ENCODE measurements at regions of chr15 and their contacts with region 1.

Region 1: GRCh38 chr15:83430441-83430840 is 16.7 kb upstream of the SH3GL3 start:
- DNase-seq: no peak
- ATAC-seq: no peak
- H3K4me3 ChIP-seq: no peak overlapping the region
- H3K27ac ChIP-seq: no peak overlapping the region
- H3K4me1 ChIP-seq: no peaks in the 10 kb centered on the region
- H3K27me3 ChIP-seq: peaks cover 0 to 32% (median 18%) of the 10 kb centered on the region in 7 donors
- CTCF ChIP-seq: no peak

Region 2: DNA sequence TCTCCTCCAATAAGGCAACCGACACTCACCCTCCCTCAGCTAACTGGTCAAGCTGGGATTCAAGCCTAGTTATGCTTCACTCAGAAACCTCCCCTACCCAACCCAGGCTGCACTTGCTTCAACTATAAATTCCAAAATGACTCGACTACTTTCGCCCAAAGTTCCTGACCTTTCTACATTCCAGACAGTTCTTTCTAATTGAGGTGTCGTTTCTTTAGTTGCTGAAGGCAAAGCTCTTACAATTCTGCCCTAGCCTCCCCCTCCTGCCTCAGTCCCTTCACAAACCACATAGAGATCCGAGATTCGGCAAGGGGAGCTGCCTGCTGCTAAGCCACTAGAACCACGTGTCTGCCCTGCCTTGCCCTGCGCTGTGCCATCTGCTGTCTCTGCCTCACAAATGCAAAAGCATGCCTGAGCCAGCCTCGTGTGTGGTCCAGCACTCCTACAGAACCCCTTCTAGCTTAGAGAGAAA is 58.0 kb before region 1 on chr15:
- intact Hi-C with region 1: no loop called
- DNase-seq: no peak
- ATAC-seq: peak in 3 of 8 donors; percentile 24 to 47 (median 33)
- H3K4me3 ChIP-seq: no peak overlapping the region
- H3K27ac ChIP-seq: no peak overlapping the region
- H3K4me1 ChIP-seq: no peaks in the 10 kb centered on the region
- H3K27me3 ChIP-seq: peaks cover 3 to 97% (median 85%) of the 10 kb centered on the region in 7 donors
- CTCF ChIP-seq: no peak

Region 3: DNA sequence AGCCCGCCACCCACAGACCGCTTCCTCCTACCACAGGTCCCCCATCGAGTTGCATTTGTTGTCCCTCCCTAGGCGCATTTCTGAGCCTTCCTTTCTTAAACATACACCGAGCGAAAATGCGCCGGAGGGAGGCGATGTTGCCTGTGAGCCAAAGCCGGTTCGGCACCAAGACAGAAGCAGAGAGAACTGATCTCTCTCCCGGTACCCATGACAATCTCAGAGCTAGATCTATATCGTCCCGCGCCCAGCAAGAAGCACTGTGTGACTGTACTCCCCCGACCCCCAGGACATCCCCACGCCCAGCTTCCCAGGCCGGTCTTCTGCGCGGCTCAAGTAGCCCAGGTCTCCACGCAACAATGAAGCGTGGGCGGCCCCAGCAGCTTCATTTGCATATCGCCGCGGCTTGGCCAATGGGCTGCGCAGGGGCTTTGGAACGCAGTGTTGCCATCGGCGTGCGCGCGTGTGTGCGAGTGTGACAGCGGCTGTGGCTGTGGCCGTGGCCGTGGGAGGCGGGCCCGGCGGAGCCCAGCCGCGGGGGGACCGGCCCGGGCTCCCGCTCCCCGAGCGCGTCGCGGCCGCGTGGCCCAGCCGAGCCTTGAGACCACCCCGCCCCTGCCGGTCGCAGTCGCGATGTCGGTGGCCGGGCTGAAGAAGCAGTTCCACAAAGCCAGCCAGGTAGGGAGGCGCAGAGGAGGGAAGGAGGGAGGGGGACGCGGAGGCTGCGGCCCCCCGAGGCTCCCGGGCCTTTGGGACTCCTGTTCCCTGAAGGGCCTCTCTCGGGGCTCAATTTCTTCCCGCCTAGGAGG is 16.7 kb after region 1 on chr15 and contains the start of gene SH3GL3:
- intact Hi-C with region 1: loop called in 1 of 10 experiments (anchors 1 kb)
- DNase-seq: peak; percentile 74 to 77
- ATAC-seq: peak; percentile 92 to 99 (median 96)
- H3K4me3 ChIP-seq: peak within 1 kb of the TSS; percentile 2 to 56 (median 50)
- H3K27ac ChIP-seq: no peak within 1 kb of the TSS
- H3K4me1 ChIP-seq: peaks cover 0 to 13% (median 8%) of the 10 kb centered on the region in 9 donors
- H3K27me3 ChIP-seq: peaks cover 0 to 53% (median 28%) of the 10 kb centered on the region in 7 donors
- CTCF ChIP-seq: peak in 5 of 9 donors; percentile 19 to 49 (median 35)
- total RNA-seq, gene SH3GL3: 0.13 to 0.17 TPM in 2 of 10 donors, not detected in the others

Region 4: GRCh38 chr15:83462953-83463433 is 32.6 kb after region 1 on chr15:
- intact Hi-C with region 1: no loop called
- DNase-seq: no peak
- ATAC-seq: no peak
- H3K4me3 ChIP-seq: no peak overlapping the region
- H3K27ac ChIP-seq: no peak overlapping the region
- H3K4me1 ChIP-seq: no peaks in the 10 kb centered on the region
- H3K27me3 ChIP-seq: peaks cover 0 to 20% (median 0%) of the 10 kb centered on the region in 7 donors
- CTCF ChIP-seq: no peak